Activated CD8-positive, alpha-beta T cell treated with anti-CD3 and anti-CD28 coated beads for 36 hours (primary cell): ENCODE measurements at regions of chr2 and their contacts with region 1.

Region 1: DNA sequence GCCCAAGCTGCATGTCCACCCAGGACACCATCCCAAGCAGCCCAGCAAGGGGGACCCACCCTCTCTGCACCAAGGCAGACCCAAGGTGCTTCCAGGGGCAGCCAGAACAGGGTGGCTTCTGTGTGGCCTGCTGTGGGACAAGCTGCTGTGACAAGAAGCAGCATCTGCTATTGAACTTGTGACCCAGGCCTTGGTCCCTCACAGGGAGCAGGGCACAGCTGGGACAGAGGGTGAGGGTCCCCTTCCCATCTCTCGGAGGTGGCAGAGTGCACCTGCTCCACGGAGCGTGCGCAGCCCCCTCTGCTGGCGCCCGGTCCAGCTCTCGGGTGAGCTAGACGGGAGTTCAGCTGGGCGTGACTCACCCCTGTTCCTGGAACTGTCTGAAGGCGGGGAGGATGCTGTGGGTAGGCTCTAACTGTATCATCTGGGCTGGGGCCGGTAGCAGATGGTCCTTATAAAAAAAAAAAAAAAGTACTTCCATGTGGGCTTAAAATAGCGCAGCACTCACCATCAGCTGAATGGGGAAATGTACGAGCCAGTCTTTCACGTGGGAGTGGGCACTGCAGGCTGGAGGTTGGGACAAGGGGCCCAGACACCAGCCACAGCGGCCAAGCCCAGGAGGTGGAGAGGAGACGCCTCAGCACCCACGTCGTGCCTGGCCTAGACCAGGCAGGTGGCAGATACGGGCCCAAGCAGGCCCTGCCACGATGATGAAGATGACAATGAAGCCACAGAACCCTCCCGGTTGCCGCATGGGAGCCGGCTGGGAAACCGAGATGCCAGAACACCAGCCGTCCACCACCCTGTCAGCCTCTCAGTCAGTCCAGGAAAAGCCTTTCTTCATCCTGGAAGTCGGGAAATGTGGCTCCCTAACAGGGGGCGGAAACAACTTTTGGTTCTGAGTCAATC is 136.8 kb upstream of the ID2 start:
- DNase-seq: peak; percentile 96
- ATAC-seq: peak; percentile 73
- H3K4me3 Mint-ChIP-seq: no peak overlapping the region
- H3K27ac Mint-ChIP-seq: peak overlapping the region; percentile 97
- H3K4me1 Mint-ChIP-seq: peaks cover 71% of the 10 kb centered on the region
- H3K27me3 Mint-ChIP-seq: peaks cover 1% of the 10 kb centered on the region
- CTCF ChIP-seq: peak; percentile 52

Region 2: DNA sequence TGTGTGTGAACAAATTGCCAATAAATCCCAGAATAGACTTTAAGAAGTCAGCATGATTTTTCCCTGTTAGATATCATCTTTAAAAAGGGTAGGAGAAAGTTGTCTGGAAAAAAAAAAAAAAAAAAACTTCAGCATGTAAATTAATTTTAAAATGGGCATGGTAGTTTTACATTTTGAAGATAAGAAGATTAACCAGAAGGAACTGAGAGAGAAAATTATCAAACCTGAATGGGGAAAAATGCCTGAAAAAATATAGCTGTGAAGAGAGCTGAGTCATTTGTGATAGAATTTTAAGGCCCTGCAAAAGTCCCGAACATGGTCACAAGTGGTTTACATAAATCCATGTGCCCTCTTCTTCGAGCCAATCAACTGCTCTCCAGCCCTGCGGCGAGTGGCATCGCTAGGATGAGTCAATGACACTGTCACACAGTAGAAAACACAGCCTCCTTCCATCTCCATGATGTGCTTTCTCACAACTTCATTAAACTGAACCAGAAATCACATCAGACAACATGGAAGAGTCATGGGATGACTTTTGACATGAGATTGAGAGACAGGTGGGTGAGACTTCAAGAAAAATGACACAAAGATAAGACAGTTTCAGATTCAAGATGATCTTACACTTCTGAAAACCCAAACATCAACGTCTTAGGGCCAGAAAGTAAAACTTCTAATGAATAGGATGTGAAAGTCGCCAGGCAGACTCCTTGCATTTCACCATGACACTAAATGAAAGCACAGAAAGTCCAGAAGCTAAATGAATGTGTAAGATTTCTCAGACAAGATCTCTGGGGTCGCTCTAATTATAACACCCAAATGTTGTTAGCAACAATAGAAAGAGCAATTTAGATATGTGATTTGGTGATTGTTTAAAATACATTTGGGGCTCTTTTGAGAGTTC is 136.2 kb before region 1 on chr2:
- CTCF ChIA-PET with region 1: no interaction called
- POLR2A ChIA-PET with region 1: interaction called, 3 read pairs
- intact Hi-C with region 1: loop called (anchors 1 kb)
- DNase-seq: peak; percentile 82
- ATAC-seq: peak; percentile 95
- H3K4me3 Mint-ChIP-seq: no peak overlapping the region
- H3K27ac Mint-ChIP-seq: peak overlapping the region; percentile 66
- H3K4me1 Mint-ChIP-seq: peaks cover 22% of the 10 kb centered on the region
- H3K27me3 Mint-ChIP-seq: peaks cover 1% of the 10 kb centered on the region
- CTCF ChIP-seq: no peak

Region 3: DNA sequence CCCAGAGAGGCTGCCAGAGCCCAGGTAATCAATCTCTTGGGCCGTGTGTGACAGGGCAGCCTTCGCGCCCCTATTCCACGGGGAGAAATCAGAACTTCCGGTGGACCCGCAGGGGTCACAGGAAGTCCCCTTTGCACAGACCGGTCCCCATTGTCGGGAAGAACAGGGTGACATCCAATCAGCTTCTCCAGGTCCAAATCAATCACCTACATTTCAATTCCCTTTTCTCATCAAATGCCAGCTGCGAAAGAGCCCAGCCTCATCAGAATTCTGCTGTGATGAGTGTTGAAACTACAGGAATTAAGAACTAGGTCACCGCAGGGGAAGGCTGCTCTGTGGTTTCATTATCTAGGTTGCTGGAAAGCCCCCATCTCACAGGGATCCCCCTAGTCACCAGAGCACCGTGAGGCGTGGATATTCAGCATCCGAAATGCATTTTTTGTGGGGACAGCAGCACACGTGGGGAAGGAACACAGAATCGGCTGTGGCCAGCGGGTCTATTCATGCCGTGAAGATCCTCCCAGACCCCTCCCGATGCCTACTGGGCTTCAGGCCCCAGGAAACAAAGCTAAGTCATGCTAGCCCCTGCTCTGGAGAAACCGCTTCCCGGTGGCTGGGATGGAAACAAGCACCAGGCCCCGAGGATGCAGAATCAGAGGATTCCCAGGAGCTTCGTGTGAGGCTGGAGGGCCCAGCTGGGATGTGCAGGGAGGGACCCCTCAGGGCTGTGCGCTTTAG is 56.9 kb before region 1 on chr2:
- CTCF ChIA-PET with region 1: interaction called, 5 read pairs
- POLR2A ChIA-PET with region 1: interaction called, 25 read pairs
- intact Hi-C with region 1: no loop called
- DNase-seq: peak; percentile 89
- ATAC-seq: peak; percentile 84
- H3K4me3 Mint-ChIP-seq: peak overlapping the region; percentile 66
- H3K27ac Mint-ChIP-seq: peak overlapping the region; percentile 79
- H3K4me1 Mint-ChIP-seq: peaks cover 47% of the 10 kb centered on the region
- H3K27me3 Mint-ChIP-seq: peaks cover 6% of the 10 kb centered on the region
- CTCF ChIP-seq: no peak

Region 4: DNA sequence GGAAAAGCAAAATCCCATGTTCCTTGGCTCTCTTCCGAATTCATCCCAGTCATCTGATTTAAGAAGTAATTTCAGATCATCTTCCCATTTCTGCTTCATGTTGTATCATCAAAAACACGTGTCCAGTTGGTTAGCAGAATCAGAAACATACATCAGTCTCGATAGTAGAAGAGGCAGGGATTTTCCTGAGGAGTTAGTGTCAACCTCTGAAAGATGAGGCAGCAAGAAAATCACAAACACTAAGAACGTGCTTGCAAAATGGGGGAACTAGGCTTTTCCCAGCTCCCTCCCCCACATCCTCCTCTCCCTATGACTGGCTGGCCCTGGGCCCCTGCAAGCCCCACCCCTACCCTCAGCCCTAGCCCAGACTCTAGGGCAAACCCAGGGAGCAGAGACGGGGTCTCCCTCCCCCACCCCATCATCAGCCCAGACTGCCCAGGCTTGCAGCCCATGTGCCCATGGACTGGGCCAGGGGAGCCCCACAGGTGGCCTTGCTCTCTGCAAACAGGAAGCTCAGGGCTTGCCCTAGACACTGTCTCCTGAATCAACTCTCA is 24.2 kb before region 1 on chr2:
- CTCF ChIA-PET with region 1: interaction called, 12 read pairs
- POLR2A ChIA-PET with region 1: interaction called, 34 read pairs
- intact Hi-C with region 1: loop called (anchors 2 kb)
- DNase-seq: peak; percentile 35
- ATAC-seq: peak; percentile 35
- H3K4me3 Mint-ChIP-seq: no peak overlapping the region
- H3K27ac Mint-ChIP-seq: peak overlapping the region; percentile 13
- H3K4me1 Mint-ChIP-seq: peaks cover 58% of the 10 kb centered on the region
- H3K27me3 Mint-ChIP-seq: no peaks in the 10 kb centered on the region
- CTCF ChIP-seq: no peak

Region 5: DNA sequence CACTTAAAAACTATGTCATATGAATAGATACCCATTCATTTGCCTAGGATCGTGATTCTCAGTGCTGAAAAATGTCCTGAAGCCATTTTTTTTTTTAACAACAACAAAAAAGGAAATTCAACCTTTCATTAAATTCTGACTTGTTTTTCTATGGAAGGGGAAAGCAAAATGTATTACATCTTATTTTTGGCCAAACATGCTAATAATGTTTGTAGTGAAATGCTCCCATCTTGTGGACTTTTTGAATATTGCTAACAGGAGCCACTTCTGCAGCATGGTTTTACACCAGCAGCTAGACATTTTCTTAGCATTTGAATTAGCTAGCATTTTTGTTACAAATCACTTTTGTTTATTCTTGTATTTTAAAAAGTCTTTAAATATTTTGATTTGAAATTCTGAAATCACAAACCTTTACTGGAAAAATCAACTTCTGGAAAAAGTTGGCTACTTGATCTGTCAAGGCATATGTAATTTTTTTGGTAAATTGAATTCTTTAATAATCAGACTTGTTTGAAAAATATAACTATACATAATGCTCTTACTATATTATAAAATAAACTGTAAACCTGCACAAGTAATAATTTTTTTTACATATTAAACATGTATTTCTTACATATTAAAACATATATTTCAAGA is 216.6 kb after region 1 on chr2:
- CTCF ChIA-PET with region 1: no interaction called
- POLR2A ChIA-PET with region 1: no interaction called
- intact Hi-C with region 1: no loop called
- DNase-seq: no peak
- ATAC-seq: no peak
- H3K4me3 Mint-ChIP-seq: no peak overlapping the region
- H3K27ac Mint-ChIP-seq: no peak overlapping the region
- H3K4me1 Mint-ChIP-seq: no peaks in the 10 kb centered on the region
- H3K27me3 Mint-ChIP-seq: no peaks in the 10 kb centered on the region
- CTCF ChIP-seq: peak; percentile 51